CD8-positive, alpha-beta T cell (primary cell): ENCODE measurements at regions of chr1 and their contacts with region 1.

Region 1: GRCh38 chr1:65048335-65048734 is 82.0 kb upstream of the JAK1 start:
- DNase-seq: no peak
- ATAC-seq: no peak
- H3K4me3 ChIP-seq: no peak overlapping the region
- H3K4me3 Mint-ChIP-seq: no peak overlapping the region
- H3K27ac ChIP-seq: no peak overlapping the region
- H3K27ac Mint-ChIP-seq: no peak overlapping the region
- H3K4me1 ChIP-seq: peaks cover 26% of the 10 kb centered on the region
- H3K4me1 Mint-ChIP-seq: peaks cover 63% of the 10 kb centered on the region
- H3K27me3 ChIP-seq: no peaks in the 10 kb centered on the region
- H3K27me3 Mint-ChIP-seq: no peaks in the 10 kb centered on the region
- CTCF ChIP-seq: no peak

Region 2: DNA sequence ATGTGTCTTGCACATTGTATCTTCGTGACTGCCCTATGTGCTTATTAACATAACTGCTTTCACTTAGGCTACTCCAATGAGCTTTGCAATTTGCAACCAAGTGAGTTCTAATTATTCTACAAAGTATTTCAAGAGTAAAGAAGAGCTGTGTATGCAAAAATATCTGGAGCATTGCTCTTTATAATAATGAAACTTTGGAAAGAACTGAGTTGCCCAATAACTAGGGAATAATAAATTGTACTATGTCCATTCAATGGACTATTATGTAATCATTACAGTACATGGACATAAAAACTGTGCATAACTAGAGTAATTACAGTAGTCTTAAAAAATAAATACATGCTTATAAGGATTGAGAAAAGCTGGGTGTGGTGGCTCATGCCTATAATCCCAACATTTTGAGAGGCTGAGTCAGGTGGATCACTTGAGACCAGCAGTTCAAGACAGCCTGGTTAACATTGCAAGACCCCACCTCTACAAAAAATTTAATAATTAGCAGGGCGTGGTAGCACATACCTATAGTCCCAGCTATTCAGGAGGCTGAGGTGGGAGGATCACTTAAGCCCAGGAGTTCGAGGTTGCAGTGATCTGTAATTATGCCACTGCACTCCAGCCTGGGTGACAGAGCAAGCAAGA is 11.7 kb before region 1 on chr1:
- CTCF ChIA-PET with region 1: interaction called, 10 read pairs
- POLR2A ChIA-PET with region 1: interaction called, 5 read pairs
- intact Hi-C with region 1: no loop called
- DNase-seq: no peak
- ATAC-seq: no peak
- H3K4me3 ChIP-seq: no peak overlapping the region
- H3K4me3 Mint-ChIP-seq: no peak overlapping the region
- H3K27ac ChIP-seq: no peak overlapping the region
- H3K27ac Mint-ChIP-seq: no peak overlapping the region
- H3K4me1 ChIP-seq: peaks cover 7% of the 10 kb centered on the region
- H3K4me1 Mint-ChIP-seq: peaks cover 13% of the 10 kb centered on the region
- H3K27me3 ChIP-seq: no peaks in the 10 kb centered on the region
- H3K27me3 Mint-ChIP-seq: no peaks in the 10 kb centered on the region
- CTCF ChIP-seq: no peak

Region 3: GRCh38 chr1:65059930-65060538 is 11.7 kb after region 1 on chr1:
- CTCF ChIA-PET with region 1: interaction called, 3 read pairs
- POLR2A ChIA-PET with region 1: interaction called, 8 read pairs
- intact Hi-C with region 1: loop called in 1 of 2 experiments (anchors 2 kb)
- DNase-seq: peak in 2 of 9 experiments; percentile 47 to 60
- ATAC-seq: peak; percentile 46
- H3K4me3 ChIP-seq: no peak overlapping the region
- H3K4me3 Mint-ChIP-seq: no peak overlapping the region
- H3K27ac ChIP-seq: no peak overlapping the region
- H3K27ac Mint-ChIP-seq: no peak overlapping the region
- H3K4me1 ChIP-seq: peaks cover 29% of the 10 kb centered on the region
- H3K4me1 Mint-ChIP-seq: peaks cover 60% of the 10 kb centered on the region
- H3K27me3 ChIP-seq: no peaks in the 10 kb centered on the region
- H3K27me3 Mint-ChIP-seq: no peaks in the 10 kb centered on the region
- CTCF ChIP-seq: peak; percentile 64